ENCODE measurements at regions of chr1 and their contacts with region 1.

Region 1: DNA sequence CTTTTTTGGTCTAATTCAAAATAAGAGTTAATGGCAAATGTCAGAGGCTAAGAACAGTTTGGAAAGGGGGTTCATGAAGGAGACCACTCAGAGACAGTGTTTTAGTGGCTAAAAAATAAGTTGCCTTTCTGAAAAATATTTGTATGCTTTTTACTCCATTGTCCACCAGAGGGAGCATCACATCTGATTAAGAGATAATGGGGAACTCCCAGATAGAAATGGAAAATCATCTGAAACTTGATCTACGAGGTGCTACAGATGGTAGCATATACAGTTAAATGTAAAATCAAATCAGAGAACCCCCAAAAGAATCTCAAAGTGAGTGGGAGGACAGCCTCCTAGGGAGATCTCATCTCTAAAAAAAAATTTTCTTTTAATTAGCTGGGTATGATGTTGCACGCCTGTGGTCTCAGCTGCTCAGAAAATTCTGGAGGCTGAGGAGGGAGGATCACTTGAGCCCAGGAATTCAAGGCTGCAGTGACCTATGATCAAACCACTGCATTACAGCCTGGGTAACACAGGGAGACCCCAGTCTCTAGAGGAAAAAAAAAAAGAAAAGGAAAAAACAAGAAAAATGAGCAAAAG is 9.7 kb downstream of the SMYD3 start:
- H3K4me3 Mint-ChIP-seq: no peak overlapping the region
- H3K27ac Mint-ChIP-seq: no peak overlapping the region
- H3K4me1 Mint-ChIP-seq: peaks cover 11% of the 10 kb centered on the region
- H3K27me3 Mint-ChIP-seq: no peaks in the 10 kb centered on the region

Region 2: GRCh38 chr1:246699095-246699735 is 201.8 kb after region 1 on chr1:
- intact Hi-C with region 1: loop called (anchors 1 kb)
- H3K4me3 Mint-ChIP-seq: peak overlapping the region; percentile 78
- H3K27ac Mint-ChIP-seq: peak overlapping the region; percentile 83
- H3K4me1 Mint-ChIP-seq: peaks cover 38% of the 10 kb centered on the region
- H3K27me3 Mint-ChIP-seq: no peaks in the 10 kb centered on the region

Region 3: DNA sequence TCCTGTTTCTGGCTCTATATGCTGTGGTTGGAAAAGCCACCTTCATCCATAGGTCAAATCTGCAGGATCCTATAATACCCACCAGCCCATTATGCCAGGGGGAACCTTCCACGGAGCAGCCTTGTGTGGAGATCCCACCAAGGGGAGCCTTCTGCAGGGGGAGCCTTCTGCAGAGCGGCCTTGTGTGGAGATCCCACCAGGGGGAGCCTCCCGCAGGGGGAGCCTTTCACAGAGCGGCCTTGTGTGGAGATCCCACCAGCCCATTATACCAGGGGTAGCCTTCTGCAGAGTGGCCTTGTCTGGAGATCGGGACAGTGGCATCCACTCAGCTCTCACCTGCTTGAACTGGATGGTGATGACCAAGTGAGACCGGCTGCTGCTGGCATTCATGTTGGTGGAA is 312.1 kb after region 1 on chr1:
- intact Hi-C with region 1: no loop called
- H3K4me3 Mint-ChIP-seq: no peak overlapping the region
- H3K27ac Mint-ChIP-seq: no peak overlapping the region
- H3K4me1 Mint-ChIP-seq: no peaks in the 10 kb centered on the region
- H3K27me3 Mint-ChIP-seq: no peaks in the 10 kb centered on the region